ENCODE measurements at regions of chr9 and their contacts with region 1.

Region 1: GRCh38 chr9:36873247-36873875 is 160.7 kb downstream of the PAX5 start:
- DNase-seq: peak; percentile 43
- H3K4me3 ChIP-seq: no peak overlapping the region
- H3K27ac ChIP-seq: no peak overlapping the region
- H3K4me1 ChIP-seq: no peaks in the 10 kb centered on the region
- H3K27me3 ChIP-seq: peaks cover 4 to 16% of the 10 kb centered on the region in 2 experiments
- CTCF ChIP-seq: peak; percentile 80 to 90
- POLR2A ChIP-seq: no peak

Region 2: GRCh38 chr9:36884721-36885120 is 11.4 kb after region 1 on chr9:
- CTCF ChIA-PET with region 1: interaction called, 11 read pairs
- POLR2A ChIA-PET with region 1: no interaction called
- dilution Hi-C with region 1: no loop called
- intact Hi-C with region 1: no loop called
- DNase-seq: no peak
- H3K4me3 ChIP-seq: no peak overlapping the region
- H3K27ac ChIP-seq: no peak overlapping the region
- H3K4me1 ChIP-seq: no peaks in the 10 kb centered on the region
- H3K27me3 ChIP-seq: peaks cover 10% of the 10 kb centered on the region in 2 experiments
- CTCF ChIP-seq: no peak
- POLR2A ChIP-seq: no peak

Region 3: GRCh38 chr9:36974731-36975130 is 101.4 kb after region 1 on chr9:
- CTCF ChIA-PET with region 1: interaction called, 55 read pairs
- POLR2A ChIA-PET with region 1: no interaction called
- dilution Hi-C with region 1: no loop called
- intact Hi-C with region 1: no loop called
- DNase-seq: no peak
- H3K4me3 ChIP-seq: no peak overlapping the region
- H3K27ac ChIP-seq: no peak overlapping the region
- H3K4me1 ChIP-seq: no peaks in the 10 kb centered on the region
- H3K27me3 ChIP-seq: peaks cover 5 to 13% of the 10 kb centered on the region in 2 experiments
- CTCF ChIP-seq: peak in 1 of 2 donors; percentile 12
- POLR2A ChIP-seq: no peak

Region 4: DNA sequence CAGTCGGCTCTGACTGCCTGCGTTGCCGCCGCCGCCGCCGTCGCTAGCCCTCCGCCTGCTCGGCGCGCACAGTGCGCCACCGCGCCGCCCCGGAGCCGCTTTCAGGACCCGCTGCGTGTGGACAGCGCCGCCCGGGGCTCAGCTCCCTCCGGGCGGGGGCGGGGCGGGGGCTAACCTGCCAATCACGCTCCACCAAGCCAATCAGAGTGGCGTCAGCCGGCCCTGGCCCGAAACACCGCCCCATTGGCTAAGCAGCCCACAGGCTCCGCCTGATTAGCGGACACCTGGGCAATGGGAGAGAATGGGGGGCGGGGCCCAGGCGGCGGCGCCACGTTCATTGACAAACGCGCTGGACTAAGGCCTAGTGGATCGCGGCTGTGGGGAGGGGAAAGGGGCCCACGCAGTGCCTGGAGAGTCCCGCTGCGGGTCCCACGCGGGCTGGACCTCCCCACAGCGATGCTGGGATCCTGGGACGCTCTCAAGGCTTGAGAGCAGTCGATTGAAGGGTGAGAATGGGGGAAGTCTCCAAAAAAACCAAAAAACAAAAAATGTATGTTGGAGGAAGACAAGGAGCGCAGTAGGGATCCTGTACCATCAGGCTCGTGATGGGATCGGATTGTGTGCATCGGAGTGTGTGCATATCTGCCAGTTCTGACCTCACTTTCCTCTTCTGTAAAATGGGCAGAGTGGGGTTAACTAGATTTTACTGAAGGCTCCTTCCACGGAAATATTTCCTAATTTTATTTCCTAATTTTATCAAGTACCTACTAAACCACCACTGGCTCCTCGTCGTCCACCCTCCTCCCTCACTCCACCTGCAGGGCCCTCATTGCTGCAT is 154.4 kb after region 1 on chr9:
- CTCF ChIA-PET with region 1: no interaction called
- POLR2A ChIA-PET with region 1: no interaction called
- dilution Hi-C with region 1: no loop called
- intact Hi-C with region 1: loop called (anchors 1 kb)
- DNase-seq: peak; percentile 93
- H3K4me3 ChIP-seq: no peak overlapping the region
- H3K27ac ChIP-seq: no peak overlapping the region
- H3K4me1 ChIP-seq: peaks cover 7% of the 10 kb centered on the region
- H3K27me3 ChIP-seq: peaks cover 89 to 97% of the 10 kb centered on the region in 2 experiments
- CTCF ChIP-seq: no peak
- POLR2A ChIP-seq: no peak

Region 5: GRCh38 chr9:37415011-37415719 is 541.8 kb after region 1 on chr9:
- CTCF ChIA-PET with region 1: interaction called, 14 read pairs
- POLR2A ChIA-PET with region 1: no interaction called
- dilution Hi-C with region 1: no loop called
- intact Hi-C with region 1: no loop called
- DNase-seq: peak; percentile 80
- H3K4me3 ChIP-seq: no peak overlapping the region
- H3K27ac ChIP-seq: no peak overlapping the region
- H3K4me1 ChIP-seq: no peaks in the 10 kb centered on the region
- H3K27me3 ChIP-seq: no peaks in the 10 kb centered on the region
- CTCF ChIP-seq: peak; percentile 66 to 85
- POLR2A ChIP-seq: no peak